Activated CD4-positive, alpha-beta T cell treated with anti-CD3 and anti-CD28 coated beads, Interleukin-2, amount 10 ng/mL, durations not matched to agents 24 days and 14 days (primary cell): ENCODE measurements at regions of chr5 and their contacts with region 1.

Region 1: DNA sequence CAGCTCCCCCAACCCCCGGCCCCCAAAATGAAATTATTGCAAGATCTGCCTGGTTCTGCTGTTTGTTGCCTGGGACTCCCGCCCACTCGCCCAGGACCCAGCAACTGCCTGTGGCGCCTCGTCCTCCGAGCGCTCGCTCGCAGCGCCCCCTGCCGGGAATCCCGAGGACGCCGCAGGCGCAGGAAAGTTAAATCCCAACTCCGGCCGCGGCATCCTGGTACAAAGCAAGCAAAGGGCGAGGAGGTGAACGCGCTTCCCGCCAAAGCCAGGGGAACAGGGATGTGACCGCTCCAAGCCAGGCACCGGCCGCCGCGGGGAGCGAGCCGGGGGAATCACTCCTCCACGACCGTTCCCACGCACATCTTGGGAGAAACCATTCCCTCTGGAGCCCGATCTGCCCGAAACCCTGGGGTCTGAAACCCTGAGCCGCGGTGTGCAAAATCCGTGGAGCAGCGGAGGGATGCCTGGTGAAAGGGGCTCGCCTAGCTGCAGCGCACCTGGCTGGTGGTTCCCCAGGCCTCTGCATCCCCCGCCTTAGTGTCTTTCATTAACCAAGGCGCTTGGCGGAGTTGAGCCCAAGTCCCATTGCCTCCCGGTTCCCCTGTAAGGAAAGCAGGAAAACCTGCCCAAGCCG is 1.3 kb downstream of the SEMA5A start:
- DNase-seq: peak; percentile 76
- H3K4me3 Mint-ChIP-seq: peak overlapping the region; percentile 44
- H3K27ac Mint-ChIP-seq: no peak overlapping the region
- H3K4me1 Mint-ChIP-seq: no peaks in the 10 kb centered on the region
- H3K27me3 Mint-ChIP-seq: peaks cover 23% of the 10 kb centered on the region

Region 2: GRCh38 chr5:9361835-9362234 is 182.8 kb before region 1 on chr5:
- intact Hi-C with region 1: loop called (anchors 10 kb)
- DNase-seq: peak; percentile 71
- H3K4me3 Mint-ChIP-seq: no peak overlapping the region
- H3K27ac Mint-ChIP-seq: no peak overlapping the region
- H3K4me1 Mint-ChIP-seq: no peaks in the 10 kb centered on the region
- H3K27me3 Mint-ChIP-seq: no peaks in the 10 kb centered on the region